Spleen (tissue), 13 donors: ENCODE measurements at regions of chr20 and their contacts with region 1.

Region 1: DNA sequence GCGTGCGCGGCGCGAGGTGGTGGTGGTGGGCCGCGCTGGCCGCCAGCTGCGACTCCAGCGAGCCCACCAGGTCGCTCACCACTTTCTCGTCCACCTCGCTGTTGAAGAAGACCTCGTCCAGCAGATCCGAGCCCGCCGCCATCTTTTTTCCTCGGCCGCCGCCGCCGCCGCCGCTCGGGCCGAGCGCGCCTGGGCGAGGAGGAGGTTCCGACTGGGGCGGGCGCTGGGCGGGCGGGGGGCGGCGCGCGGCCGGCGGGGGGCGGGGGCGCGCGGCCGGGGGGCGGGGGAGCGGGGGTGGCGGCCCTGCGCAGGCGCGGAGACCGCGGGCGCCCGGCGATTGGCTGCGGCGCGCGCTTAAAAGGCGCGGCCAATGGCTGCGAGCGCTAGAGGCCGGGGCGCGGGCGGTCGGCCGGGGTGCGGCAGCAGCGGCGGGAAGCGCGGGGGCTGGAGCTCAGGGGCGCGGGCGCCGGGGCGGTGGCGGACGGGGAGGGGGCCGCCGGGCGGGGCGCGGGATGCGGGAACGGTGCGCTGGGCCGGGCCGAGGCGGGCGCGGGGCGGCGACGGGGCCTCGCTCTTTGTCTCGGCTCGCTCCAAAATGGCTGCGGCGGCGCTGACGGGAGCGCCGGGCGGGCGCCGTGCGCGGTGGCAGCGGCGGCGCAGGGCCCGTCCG is at the start of gene TAF4:
- DNase-seq: peak; percentile 95
- H3K4me3 ChIP-seq: peak within 1 kb of the TSS; percentile 56 to 90 (median 66)
- H3K27ac ChIP-seq: peak within 1 kb of the TSS; percentile 72 to 95 (median 88)
- H3K4me1 ChIP-seq: peaks cover 29 to 58% (median 44%) of the 10 kb centered on the region in 6 donors
- H3K27me3 ChIP-seq: no peaks in the 10 kb centered on the region
- CTCF ChIP-seq: no peak
- POLR2A ChIP-seq: peak in 2 of 3 donors; percentile 69 to 95
- total RNA-seq, gene TAF4: 15.5 to 28.3 (median 18.6) TPM

Region 2: GRCh38 chr20:62121776-62122631 is 56.2 kb after region 1 on chr20 and contains the start of gene LSM14B:
- intact Hi-C with region 1: loop called (anchors 5 kb)
- DNase-seq: peak; percentile 99
- H3K4me3 ChIP-seq: peak within 1 kb of the TSS; percentile 67 to 96 (median 86)
- H3K27ac ChIP-seq: peak within 1 kb of the TSS; percentile 70 to 97 (median 94)
- H3K4me1 ChIP-seq: peaks cover 7 to 68% (median 36%) of the 10 kb centered on the region in 6 donors
- H3K27me3 ChIP-seq: peaks cover 0 to 23% (median 0%) of the 10 kb centered on the region in 7 donors
- CTCF ChIP-seq: no peak
- POLR2A ChIP-seq: peak in 2 of 3 donors; percentile 12 to 50
- total RNA-seq, gene LSM14B: 17.6 to 37.6 (median 31.9) TPM

Region 3: GRCh38 chr20:62201173-62202082 is 135.6 kb after region 1 on chr20:
- intact Hi-C with region 1: no loop called
- DNase-seq: peak; percentile 85
- H3K4me3 ChIP-seq: peak overlapping the region in 1 of 8 donors; percentile 36
- H3K27ac ChIP-seq: peak overlapping the region in 3 of 8 donors; percentile 11 to 56 (median 17)
- H3K4me1 ChIP-seq: peaks cover 3 to 36% (median 27%) of the 10 kb centered on the region in 6 donors
- H3K27me3 ChIP-seq: no peaks in the 10 kb centered on the region
- CTCF ChIP-seq: no peak
- POLR2A ChIP-seq: no peak

Region 4: GRCh38 chr20:62339647-62340070 is 273.9 kb after region 1 on chr20:
- intact Hi-C with region 1: no loop called
- DNase-seq: no peak
- H3K4me3 ChIP-seq: peak overlapping the region in 2 of 8 donors; percentile 14 to 29
- H3K27ac ChIP-seq: peak overlapping the region in 7 of 8 donors; percentile 65 to 82 (median 79)
- H3K4me1 ChIP-seq: peaks cover 6 to 53% (median 39%) of the 10 kb centered on the region in 6 donors
- H3K27me3 ChIP-seq: no peaks in the 10 kb centered on the region
- CTCF ChIP-seq: no peak
- POLR2A ChIP-seq: no peak